GM13976 (cell line): ENCODE measurements at regions of chr12 and their contacts with region 1.

Region 1: DNA sequence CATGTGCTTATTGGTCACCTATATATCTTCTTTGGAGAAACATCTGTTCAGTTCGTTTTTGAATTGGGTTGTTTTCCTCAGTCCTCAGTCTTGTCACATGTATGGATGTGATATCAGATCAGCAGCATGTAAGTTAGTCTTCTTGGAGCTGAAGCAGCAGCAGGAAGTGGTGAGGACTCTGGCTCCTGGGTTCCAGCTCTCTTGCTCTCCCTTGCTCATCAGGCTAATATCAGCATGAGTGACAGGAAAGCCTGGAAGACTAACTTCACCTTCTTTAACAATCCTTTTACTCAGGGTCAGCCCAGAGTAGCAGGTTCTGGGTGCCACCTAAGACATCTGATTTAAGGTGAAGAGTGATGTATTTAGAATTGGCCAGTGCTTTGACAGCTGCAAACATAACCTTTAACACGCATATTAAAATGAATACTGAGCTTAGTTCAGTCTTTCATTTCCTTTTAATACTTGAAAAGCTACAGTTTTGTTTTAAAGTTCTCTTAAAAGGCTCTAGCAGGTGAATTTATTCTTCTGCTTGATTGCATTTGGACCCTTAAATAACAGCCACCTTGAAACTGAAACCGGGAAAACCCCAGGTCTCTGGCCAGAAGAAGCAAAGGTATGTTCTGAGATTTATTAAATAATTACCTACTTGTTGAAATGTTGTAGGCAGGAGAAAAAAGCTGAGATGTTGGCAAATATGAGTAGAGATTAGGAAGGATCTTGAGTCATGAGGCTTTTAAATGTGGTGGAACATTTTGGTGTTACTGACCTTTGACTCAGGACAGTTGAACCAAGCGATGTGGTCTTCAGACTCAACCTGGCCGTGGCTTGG is 54.3 kb downstream of the DRAM1 start:
- DNase-seq: peak; percentile 30
- CTCF ChIP-seq: no peak

Region 2: DNA sequence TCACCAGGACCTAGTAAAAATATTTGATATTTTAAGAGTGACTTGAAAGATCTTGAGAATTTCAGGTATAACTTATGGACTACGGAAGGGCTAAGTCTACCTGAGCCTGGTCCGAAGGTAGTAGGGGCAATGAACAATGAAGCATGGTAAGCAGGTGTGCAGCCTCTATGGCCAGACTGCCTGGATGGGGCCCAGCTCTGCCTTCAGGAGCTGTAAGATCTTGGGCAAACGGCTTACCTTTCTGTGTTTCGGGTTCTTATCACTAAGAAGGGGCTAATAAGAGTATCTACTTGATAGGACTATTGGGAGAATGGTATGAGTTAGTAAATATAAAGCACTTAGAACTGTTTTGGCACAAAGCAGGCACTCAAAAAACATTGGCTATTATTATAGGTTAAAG is 149.1 kb after region 1 on chr12:
- in situ Hi-C with region 1: no loop called
- DNase-seq: no peak
- CTCF ChIP-seq: no peak

Region 3: GRCh38 chr12:102484428-102484958 is 552.8 kb after region 1 on chr12:
- in situ Hi-C with region 1: loop called (anchors 5 kb)
- DNase-seq: peak; percentile 31
- CTCF ChIP-seq: peak; percentile 71